Activated CD4-positive, alpha-beta T cell treated with anti-CD3 and anti-CD28 coated beads for 36 hours (primary cell): ENCODE measurements at regions of chr15 and their contacts with region 1.

Region 1: DNA sequence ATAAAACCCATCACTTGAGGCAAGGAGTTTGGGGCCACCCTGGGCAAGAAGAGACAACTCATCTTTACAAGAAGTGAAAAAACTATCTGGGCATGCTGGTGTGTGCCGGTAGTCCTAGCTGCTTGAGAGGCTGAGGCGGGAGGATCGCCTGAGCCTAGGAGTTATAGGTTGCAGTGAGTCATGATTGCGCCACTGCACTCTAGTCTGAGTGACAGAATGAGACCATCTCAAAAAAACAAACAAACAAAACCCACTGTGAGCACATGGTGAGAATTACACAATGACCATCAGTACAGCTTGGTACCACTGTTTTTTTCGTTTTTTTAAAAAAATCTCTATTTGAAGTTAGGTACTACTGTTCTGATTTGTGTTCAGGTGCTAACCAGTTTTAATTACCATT is 13.6 kb downstream of the VPS39 start:
- DNase-seq: peak; percentile 37
- ATAC-seq: peak; percentile 24
- H3K4me3 Mint-ChIP-seq: no peak overlapping the region
- H3K27ac Mint-ChIP-seq: peak overlapping the region; percentile 93
- H3K4me1 Mint-ChIP-seq: peaks cover 55% of the 10 kb centered on the region
- H3K27me3 Mint-ChIP-seq: no peaks in the 10 kb centered on the region

Region 2: DNA sequence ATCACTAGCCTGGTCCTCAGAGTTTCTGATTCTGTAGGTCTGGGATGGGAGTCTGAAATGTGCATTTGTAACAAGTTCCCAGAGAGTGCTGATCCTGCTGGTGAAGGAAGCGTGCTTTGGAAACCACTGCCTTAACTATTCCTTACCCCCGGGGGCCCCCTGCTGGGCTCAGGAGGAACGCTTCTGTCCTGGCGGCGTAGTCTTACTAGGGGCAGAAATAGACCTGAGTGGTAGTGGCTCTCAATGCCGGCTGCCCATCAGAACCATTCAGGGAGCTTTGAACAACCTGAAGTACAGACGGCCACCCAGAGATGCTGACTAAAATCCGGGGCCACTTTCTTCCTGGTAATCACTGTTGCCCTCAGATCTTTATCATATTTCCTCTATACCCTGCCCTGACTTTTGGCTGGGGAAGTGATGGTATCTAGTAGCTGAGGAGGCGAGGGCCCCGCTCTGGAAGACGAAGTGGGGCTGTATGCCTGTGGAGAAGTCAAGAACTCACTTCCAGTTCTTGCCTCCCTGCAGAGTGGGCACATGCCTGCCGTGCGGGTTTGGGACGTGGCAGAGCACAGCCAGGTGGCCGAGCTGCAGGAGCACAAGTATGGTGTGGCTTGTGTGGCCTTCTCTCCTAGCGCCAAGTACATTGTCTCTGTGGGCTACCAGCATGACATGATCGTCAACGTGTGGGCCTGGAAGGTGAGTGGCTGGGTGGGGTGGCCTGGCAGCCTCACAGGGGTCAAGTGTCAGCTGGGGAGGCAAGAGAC is 382.9 kb before region 1 on chr15:
- CTCF ChIA-PET with region 1: no interaction called
- POLR2A ChIA-PET with region 1: no interaction called
- intact Hi-C with region 1: no loop called
- DNase-seq: peak; percentile 84
- ATAC-seq: peak; percentile 98
- H3K4me3 Mint-ChIP-seq: no peak overlapping the region
- H3K27ac Mint-ChIP-seq: no peak overlapping the region
- H3K4me1 Mint-ChIP-seq: no peaks in the 10 kb centered on the region
- H3K27me3 Mint-ChIP-seq: no peaks in the 10 kb centered on the region

Region 3: GRCh38 chr15:42107473-42107872 is 87.0 kb before region 1 on chr15:
- CTCF ChIA-PET with region 1: no interaction called
- POLR2A ChIA-PET with region 1: no interaction called
- intact Hi-C with region 1: loop called in 1 of 2 experiments (anchors 5 kb)
- DNase-seq: peak; percentile 81
- ATAC-seq: peak; percentile 95
- H3K4me3 Mint-ChIP-seq: no peak overlapping the region
- H3K27ac Mint-ChIP-seq: peak overlapping the region; percentile 27
- H3K4me1 Mint-ChIP-seq: peaks cover 18% of the 10 kb centered on the region
- H3K27me3 Mint-ChIP-seq: peaks cover 24% of the 10 kb centered on the region

Region 4: DNA sequence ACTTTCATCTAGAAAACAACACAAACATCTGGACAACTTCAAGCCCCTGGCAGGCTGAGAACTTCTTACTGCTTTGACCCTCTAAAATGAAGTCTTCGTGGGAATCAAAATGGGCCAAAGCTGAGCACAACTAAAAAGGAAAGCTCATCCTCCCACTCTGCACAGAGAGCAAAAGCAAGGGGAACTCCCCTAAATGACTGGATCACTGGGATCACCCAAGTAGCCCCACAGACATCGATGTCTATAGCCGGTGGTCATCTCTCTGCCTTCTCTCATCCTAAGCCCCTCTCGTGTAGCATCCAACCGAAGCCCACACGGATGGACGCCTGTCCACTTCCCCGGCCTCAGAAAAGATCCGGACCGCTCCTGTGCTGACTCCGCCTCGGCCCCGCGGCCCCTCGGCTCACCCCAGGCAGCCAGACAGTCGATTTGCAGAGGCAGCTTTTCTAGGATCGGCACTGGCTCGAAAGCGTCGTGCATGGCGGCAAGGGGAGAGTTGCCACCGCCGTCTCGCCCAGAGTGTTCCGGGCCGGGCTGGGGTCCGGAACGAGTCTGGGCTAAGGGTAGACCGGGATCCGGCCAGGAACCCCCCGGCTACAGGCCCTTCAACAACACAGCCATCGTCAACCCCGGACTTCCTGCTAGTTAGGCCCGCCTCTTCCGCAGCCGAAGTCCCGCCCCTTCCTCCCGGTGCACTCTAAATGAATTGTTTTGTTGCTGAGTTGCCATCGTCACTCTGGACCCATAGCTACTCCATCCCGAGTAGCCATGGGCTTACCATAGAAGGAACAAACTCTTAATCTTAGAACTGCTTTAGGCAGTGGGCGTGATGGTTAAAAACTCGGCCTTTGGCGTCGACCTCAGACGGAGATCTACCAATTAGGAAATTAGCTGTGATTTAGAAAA is 13.4 kb after region 1 on chr15 and contains the start of gene VPS39:
- CTCF ChIA-PET with region 1: interaction called, 5 read pairs
- POLR2A ChIA-PET with region 1: no interaction called
- intact Hi-C with region 1: loop called (anchors 1 to 2 kb)
- DNase-seq: peak; percentile 91
- ATAC-seq: peak; percentile 98
- H3K4me3 Mint-ChIP-seq: peak within 1 kb of the TSS; percentile 99
- H3K27ac Mint-ChIP-seq: peak within 1 kb of the TSS; percentile 97
- H3K4me1 Mint-ChIP-seq: peaks cover 32% of the 10 kb centered on the region
- H3K27me3 Mint-ChIP-seq: no peaks in the 10 kb centered on the region
- total RNA-seq, gene VPS39: 49.5 to 56.2 TPM

Region 5: DNA sequence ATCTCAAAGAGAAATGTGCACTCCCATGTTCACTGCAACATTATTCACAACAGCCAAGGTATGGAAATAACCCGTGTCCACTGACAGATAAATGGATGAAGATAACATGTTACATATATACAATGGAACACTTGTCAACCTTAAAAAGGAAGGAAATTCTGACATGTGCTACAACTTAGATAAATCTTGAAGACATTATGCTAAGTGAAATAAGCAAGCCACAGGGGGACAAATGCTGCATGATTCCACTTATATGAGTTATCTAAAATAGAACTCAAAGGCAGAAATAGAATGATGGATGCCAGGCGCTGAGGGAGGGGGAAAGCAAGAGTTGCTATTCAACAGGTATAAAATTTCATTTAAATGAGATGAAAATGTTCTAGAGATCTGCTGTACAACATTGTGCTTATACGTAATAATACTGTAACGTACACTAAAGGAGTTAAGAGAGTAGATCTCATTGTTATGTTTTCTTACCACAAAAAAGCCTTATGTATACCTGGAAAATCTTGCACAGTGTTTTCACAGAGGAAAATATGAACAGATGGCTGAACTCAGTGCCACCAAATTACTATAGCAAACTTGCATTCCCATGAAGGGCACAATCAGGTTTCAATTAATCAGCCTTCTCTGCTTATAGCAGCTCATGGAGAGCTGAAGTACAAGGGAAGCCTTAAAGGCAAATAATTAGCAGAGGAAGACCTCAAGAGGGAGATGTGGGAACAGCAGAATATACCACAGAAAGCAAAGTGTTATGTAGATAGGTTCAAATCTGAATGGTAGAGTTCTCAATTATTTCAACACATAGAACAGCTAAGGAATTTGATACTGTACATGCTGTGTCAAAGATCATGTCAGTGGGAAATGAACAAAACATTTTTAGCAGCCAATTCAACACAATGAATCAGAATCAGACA is 21.7 kb after region 1 on chr15:
- CTCF ChIA-PET with region 1: interaction called, 4 read pairs
- POLR2A ChIA-PET with region 1: no interaction called
- intact Hi-C with region 1: loop called in 1 of 2 experiments (anchors 2 kb)
- DNase-seq: no peak
- ATAC-seq: peak; percentile 71
- H3K4me3 Mint-ChIP-seq: no peak overlapping the region
- H3K27ac Mint-ChIP-seq: peak overlapping the region; percentile 68
- H3K4me1 Mint-ChIP-seq: peaks cover 26% of the 10 kb centered on the region
- H3K27me3 Mint-ChIP-seq: no peaks in the 10 kb centered on the region

Region 6: GRCh38 chr15:42286445-42287029 is 92.0 kb after region 1 on chr15:
- CTCF ChIA-PET with region 1: no interaction called
- POLR2A ChIA-PET with region 1: no interaction called
- intact Hi-C with region 1: no loop called
- DNase-seq: no peak
- ATAC-seq: no peak
- H3K4me3 Mint-ChIP-seq: no peak overlapping the region
- H3K27ac Mint-ChIP-seq: no peak overlapping the region
- H3K4me1 Mint-ChIP-seq: no peaks in the 10 kb centered on the region
- H3K27me3 Mint-ChIP-seq: no peaks in the 10 kb centered on the region

Region 7: GRCh38 chr15:42796955-42797779 is 602.7 kb after region 1 on chr15:
- CTCF ChIA-PET with region 1: no interaction called
- POLR2A ChIA-PET with region 1: no interaction called
- intact Hi-C with region 1: no loop called
- DNase-seq: no peak
- ATAC-seq: no peak
- H3K4me3 Mint-ChIP-seq: no peak overlapping the region
- H3K27ac Mint-ChIP-seq: no peak overlapping the region
- H3K4me1 Mint-ChIP-seq: no peaks in the 10 kb centered on the region
- H3K27me3 Mint-ChIP-seq: no peaks in the 10 kb centered on the region